Heart left ventricle (tissue), 16 donors: ENCODE measurements at regions of chr5 and their contacts with region 1.

Region 1: GRCh38 chr5:178130604-178131485 is at the start of gene RMND5B:
- DNase-seq: peak; percentile 83 to 94 (median 89)
- ATAC-seq: peak; percentile 79 to 97 (median 96)
- H3K4me3 ChIP-seq: peak within 1 kb of the TSS; percentile 59 to 97 (median 92)
- H3K27ac ChIP-seq: peak within 1 kb of the TSS; percentile 86 to 98 (median 96)
- H3K4me1 ChIP-seq: peaks cover 0 to 28% (median 10%) of the 10 kb centered on the region in 12 donors
- H3K27me3 ChIP-seq: no peaks in the 10 kb centered on the region
- CTCF ChIP-seq: peak in 1 of 12 donors; percentile 4
- POLR2A ChIP-seq: peak; percentile 44 to 84
- total RNA-seq, gene RMND5B: 26.4 to 42.2 (median 32.7) TPM

Region 2: DNA sequence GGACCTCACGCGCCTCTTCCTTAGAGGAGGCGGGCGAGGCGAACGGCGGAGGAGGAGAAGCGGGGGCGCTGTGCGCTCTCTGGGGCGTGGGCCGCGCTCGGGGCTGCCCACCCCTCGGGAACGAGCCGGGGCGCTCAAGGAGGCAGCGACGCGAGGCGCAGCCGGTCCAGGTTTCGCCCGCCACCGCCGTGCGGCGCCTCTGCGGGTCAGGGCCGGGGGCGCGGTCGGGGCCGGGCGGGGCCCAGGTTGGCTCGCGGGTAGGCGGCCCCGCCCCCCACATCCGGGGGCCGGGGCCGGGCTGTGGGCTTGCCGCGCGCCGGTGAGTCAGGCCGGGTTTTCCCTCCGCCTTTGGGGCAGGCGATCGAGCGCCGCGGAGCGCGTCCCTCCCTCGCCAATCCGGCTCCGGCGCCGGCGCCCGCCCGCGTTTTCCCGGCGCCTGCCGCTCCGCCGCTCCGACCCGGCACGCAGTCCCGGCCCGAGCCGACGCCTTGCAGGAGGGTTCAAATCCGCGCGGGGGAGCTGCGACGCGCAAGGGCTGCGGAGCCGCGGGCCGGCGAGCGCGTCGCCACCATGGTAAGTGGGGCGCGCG is 17.6 kb before region 1 on chr5 and contains the start of gene N4BP3:
- intact Hi-C with region 1: loop called in 1 of 10 experiments (anchors 2 kb)
- DNase-seq: peak; percentile 39 to 77 (median 65)
- ATAC-seq: peak in 3 of 4 donors; percentile 58 to 77 (median 65)
- H3K4me3 ChIP-seq: peak within 1 kb of the TSS; percentile 44 to 69 (median 61)
- H3K27ac ChIP-seq: peak within 1 kb of the TSS; percentile 53 to 90 (median 75)
- H3K4me1 ChIP-seq: peaks cover 0 to 48% (median 22%) of the 10 kb centered on the region in 12 donors
- H3K27me3 ChIP-seq: peaks cover 5 to 47% (median 20%) of the 10 kb centered on the region in 9 donors
- CTCF ChIP-seq: peak in 1 of 12 donors; percentile 12
- POLR2A ChIP-seq: peak in 1 of 2 donors; percentile 6
- total RNA-seq, gene N4BP3: 1.9 to 6.6 (median 2.1) TPM

Region 3: GRCh38 chr5:178153573-178154343 is 22.9 kb after region 1 on chr5 and contains the start of gene NHP2:
- intact Hi-C with region 1: loop called in 1 of 10 experiments (anchors 2 kb)
- DNase-seq: peak; percentile 98 to 99 (median 99)
- ATAC-seq: peak; percentile 99 to 100 (median 99)
- H3K4me3 ChIP-seq: peak within 1 kb of the TSS; percentile 57 to 97 (median 84)
- H3K27ac ChIP-seq: peak within 1 kb of the TSS in 11 of 12 donors; percentile 16 to 83 (median 68)
- H3K4me1 ChIP-seq: peaks cover 6 to 28% (median 17%) of the 10 kb centered on the region in 12 donors
- H3K27me3 ChIP-seq: no peaks in the 10 kb centered on the region
- CTCF ChIP-seq: no peak
- POLR2A ChIP-seq: peak in 1 of 2 donors; percentile 59
- total RNA-seq, gene NHP2: 60.9 to 196 (median 75.2) TPM